ENCODE measurements at regions of chr15 and their contacts with region 1.

Region 1: DNA sequence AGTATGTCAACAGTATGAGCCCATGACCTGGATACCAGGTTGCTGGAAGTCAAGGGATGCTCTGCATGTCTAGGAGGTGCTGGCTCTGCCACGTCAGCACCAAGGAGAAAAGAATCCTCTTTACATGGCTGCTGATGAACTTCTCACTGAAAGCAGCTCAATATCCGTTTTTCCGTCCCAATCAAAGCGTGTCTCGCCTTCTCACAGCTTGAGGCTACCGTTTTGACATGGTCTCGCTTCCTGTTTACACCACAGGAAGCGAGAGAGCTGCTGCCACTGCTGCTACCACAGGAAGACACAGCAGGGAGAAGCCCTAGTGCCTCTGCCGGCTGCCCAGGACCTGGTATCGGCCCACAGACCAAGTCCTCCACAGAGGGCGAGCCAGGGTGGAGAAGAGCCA is 27.3 kb downstream of the STARD5 start:
- DNase-seq: peak; percentile 87 to 91 (median 89)
- H3K4me3 ChIP-seq: peak overlapping the region; percentile 67 to 91 (median 78)
- H3K4me3 Mint-ChIP-seq: peak overlapping the region; percentile 97 to 99
- H3K27ac ChIP-seq: peak overlapping the region; percentile 92 to 97
- H3K27ac Mint-ChIP-seq: peak overlapping the region; percentile 98 to 99 (median 99)
- H3K4me1 ChIP-seq: peaks cover 86 to 96% of the 10 kb centered on the region in 2 donors
- H3K4me1 Mint-ChIP-seq: peaks cover 96% of the 10 kb centered on the region
- H3K27me3 ChIP-seq: no peaks in the 10 kb centered on the region
- H3K27me3 Mint-ChIP-seq: peaks cover 0 to 5% (median 2%) of the 10 kb centered on the region in 3 donors
- CTCF ChIP-seq: no peak

Region 2: DNA sequence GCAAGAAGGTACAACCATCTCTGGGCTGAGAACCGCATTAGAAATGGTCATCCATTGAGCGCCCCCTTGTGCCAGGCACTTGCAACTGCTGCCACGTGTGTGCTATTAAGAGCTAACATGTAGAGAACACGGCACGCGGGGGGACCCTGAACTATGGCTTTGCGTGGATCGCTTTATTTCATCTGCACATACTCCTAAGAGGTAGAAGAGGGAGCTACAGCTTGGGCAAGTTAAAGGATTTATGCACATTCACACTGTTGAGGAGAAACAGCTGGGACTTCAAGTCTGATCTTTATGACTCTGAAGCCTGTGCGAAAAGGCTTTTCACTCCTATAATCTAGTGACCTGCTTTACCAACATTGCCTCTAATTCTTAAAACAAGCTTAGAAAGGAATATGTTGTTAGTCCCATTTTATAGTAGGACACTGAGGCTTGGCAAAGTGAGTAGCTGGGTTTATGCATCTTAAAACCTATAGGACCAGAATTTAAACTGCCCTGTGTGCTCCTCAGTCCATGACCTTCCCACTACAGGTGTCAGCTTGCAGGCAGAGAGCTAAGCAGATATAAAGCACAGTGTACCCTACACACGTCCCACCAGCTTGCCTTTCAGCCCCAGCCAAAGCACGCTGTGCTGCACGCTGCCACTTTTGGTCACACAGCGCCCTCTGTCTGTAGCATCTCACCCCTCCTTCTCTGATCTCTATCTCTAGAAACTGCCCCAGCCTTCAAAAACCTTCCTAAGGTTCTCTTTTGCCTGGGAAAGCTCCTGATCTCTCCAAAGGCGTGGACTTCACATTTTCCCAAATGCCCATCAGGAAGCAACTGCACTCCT is 30.5 kb before region 1 on chr15:
- intact Hi-C with region 1: no loop called
- DNase-seq: peak; percentile 64 to 81 (median 72)
- H3K4me3 ChIP-seq: peak overlapping the region in 1 of 3 experiments; percentile 44
- H3K4me3 Mint-ChIP-seq: peak overlapping the region; percentile 41 to 46
- H3K27ac ChIP-seq: no peak overlapping the region
- H3K27ac Mint-ChIP-seq: peak overlapping the region in 2 of 7 donors; percentile 19 to 61
- H3K4me1 ChIP-seq: peaks cover 12 to 23% of the 10 kb centered on the region in 2 donors
- H3K4me1 Mint-ChIP-seq: peaks cover 27% of the 10 kb centered on the region
- H3K27me3 ChIP-seq: peaks cover 2 to 3% of the 10 kb centered on the region in 2 donors
- H3K27me3 Mint-ChIP-seq: peaks cover 7 to 10% (median 10%) of the 10 kb centered on the region in 3 donors
- CTCF ChIP-seq: peak; percentile 86

Region 3: DNA sequence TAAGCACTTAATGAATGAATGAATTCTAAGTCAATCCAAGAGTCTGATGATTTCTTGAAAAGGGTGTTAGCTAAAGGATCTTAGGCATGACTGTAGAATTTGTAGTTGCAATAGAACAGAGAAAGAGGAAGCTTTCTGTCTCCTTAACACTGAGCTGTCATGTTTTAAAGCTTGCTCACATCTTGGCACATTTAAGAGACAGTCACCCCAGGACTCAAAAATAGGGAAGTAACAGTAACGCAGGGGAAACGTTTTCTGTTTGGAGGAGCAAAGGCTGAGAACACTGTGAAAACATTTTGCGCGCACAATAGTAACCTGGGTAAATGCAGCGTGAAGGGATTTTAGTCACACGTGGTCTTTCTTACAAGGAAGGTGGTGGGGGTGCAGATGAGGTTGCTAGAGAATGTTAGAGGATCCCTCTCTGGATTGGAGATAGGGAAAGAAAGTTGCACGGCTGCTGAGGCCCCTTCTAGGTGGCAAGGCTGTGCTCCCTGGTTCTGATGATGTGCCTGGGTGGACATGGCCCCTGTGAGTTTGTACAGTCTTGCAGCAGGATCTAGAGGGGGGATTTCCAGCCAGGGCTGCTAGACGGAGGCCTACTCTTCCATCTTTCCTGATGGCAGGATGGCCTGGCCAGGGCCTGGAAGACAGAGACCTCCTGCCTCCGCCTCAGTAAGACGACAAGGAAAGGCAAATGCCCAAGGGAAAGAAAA is 15.2 kb after region 1 on chr15:
- intact Hi-C with region 1: loop called in 1 of 2 experiments (anchors 2 kb)
- DNase-seq: peak; percentile 91 to 95 (median 95)
- H3K4me3 ChIP-seq: peak overlapping the region in 1 of 3 experiments; percentile 44
- H3K4me3 Mint-ChIP-seq: peak overlapping the region; percentile 17 to 69
- H3K27ac ChIP-seq: peak overlapping the region; percentile 97 to 98
- H3K27ac Mint-ChIP-seq: peak overlapping the region; percentile 94 to 99 (median 98)
- H3K4me1 ChIP-seq: peaks cover 40 to 52% of the 10 kb centered on the region in 2 donors
- H3K4me1 Mint-ChIP-seq: peaks cover 64% of the 10 kb centered on the region
- H3K27me3 ChIP-seq: no peaks in the 10 kb centered on the region
- H3K27me3 Mint-ChIP-seq: peaks cover 0 to 4% (median 0%) of the 10 kb centered on the region in 3 donors
- CTCF ChIP-seq: no peak

Region 4: DNA sequence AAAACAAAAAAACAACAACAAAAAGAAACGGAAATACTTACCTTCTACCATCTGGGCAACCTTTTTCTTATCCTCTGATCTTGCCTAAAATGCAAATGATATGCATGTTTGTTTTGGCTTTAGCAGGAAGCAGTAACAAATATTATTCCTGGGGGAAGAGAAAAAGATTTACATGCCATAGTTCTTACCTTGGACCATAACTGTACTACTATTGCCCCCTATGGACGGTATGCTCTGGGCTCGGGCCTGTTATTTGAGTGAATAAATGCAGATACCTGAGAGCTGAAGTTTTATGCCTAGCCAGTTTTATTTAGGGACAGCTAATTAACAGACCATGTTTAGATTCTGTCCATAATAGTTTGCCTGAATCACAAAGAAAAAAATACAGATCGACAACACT is 39.9 kb after region 1 on chr15:
- intact Hi-C with region 1: loop called in 1 of 2 experiments (anchors 5 kb)
- DNase-seq: peak in 2 of 3 donors; percentile 30 to 36
- H3K4me3 ChIP-seq: no peak overlapping the region
- H3K4me3 Mint-ChIP-seq: no peak overlapping the region
- H3K27ac ChIP-seq: no peak overlapping the region
- H3K27ac Mint-ChIP-seq: no peak overlapping the region
- H3K4me1 ChIP-seq: peaks cover 10 to 16% of the 10 kb centered on the region in 2 donors
- H3K4me1 Mint-ChIP-seq: peaks cover 12% of the 10 kb centered on the region
- H3K27me3 ChIP-seq: no peaks in the 10 kb centered on the region
- H3K27me3 Mint-ChIP-seq: peaks cover 0 to 5% (median 2%) of the 10 kb centered on the region in 3 donors
- CTCF ChIP-seq: peak; percentile 35

Region 5: GRCh38 chr15:81752546-81752942 is 455.9 kb after region 1 on chr15:
- intact Hi-C with region 1: no loop called
- DNase-seq: no peak
- H3K4me3 ChIP-seq: no peak overlapping the region
- H3K4me3 Mint-ChIP-seq: no peak overlapping the region
- H3K27ac ChIP-seq: no peak overlapping the region
- H3K27ac Mint-ChIP-seq: no peak overlapping the region
- H3K4me1 ChIP-seq: no peaks in the 10 kb centered on the region
- H3K4me1 Mint-ChIP-seq: peaks cover 3% of the 10 kb centered on the region
- H3K27me3 ChIP-seq: no peaks in the 10 kb centered on the region
- H3K27me3 Mint-ChIP-seq: peaks cover 0 to 2% (median 0%) of the 10 kb centered on the region in 3 donors
- CTCF ChIP-seq: no peak